ENCODE measurements at regions of chr2 and their contacts with region 1.

Region 1: DNA sequence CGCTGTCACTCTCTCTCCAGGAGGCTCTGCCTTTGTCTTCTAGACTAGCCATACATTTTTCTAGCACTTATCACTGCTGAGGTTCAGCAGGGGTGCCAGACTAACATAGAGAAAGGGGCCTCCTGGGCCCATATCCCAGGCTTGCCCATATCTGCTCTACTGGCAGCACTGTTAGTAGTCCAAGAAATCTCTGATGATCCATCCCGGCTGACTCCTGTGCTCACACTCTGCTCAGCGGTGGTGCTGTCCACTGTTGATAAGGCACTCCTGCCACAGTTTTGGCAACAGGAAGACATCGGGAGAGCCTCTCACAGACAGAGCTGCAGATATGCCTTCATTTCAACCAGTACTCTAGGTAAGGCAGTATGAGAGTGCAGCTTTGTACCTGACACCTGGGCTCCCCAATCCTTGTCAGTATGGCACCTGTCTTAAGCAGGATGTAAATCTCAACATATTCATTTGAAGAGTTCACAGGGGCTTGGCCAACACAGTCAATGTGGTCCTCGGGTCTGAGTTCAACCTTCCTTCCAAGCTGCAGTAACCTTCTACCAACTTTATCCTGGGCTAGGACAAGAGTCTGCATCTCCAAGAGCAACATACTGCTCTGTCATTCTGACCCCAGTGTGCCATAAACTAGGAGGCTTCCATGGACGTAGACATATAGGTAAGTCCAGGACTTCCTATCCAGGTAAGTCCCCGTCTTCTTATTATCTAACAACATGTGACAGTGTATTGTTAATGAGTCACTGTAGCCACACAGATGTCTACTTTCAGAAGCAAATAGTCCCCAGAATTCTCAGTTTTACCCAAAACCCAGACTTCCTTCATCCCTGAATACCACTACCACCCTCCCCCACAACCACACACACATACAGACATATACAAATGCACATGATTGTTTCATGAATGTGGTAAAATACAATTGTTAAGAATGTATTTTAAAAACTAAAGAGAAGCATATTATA is 16.2 kb downstream of the KLF7 start:
- DNase-seq: no peak
- ATAC-seq: peak; percentile 78

Region 2: GRCh38 chr2:207107551-207107950 is 42.0 kb before region 1 on chr2:
- intact Hi-C with region 1: loop called (anchors 5 kb)
- DNase-seq: peak; percentile 72
- ATAC-seq: no peak